Activated CD8-positive, alpha-beta memory T cell treated with anti-CD3 and anti-CD28 coated beads, Interleukin-2, amount 10 ng/mL, durations not matched to agents 7 days and 5 days (primary cell): ENCODE measurements at regions of chr17 and their contacts with region 1.

Region 1: GRCh38 chr17:42248351-42249179 is 27.6 kb downstream of the STAT5B start:
- DNase-seq: peak; percentile 89
- ATAC-seq: peak; percentile 89
- H3K4me3 Mint-ChIP-seq: peak overlapping the region; percentile 80
- H3K27ac Mint-ChIP-seq: peak overlapping the region; percentile 96
- H3K4me1 Mint-ChIP-seq: peaks cover 65% of the 10 kb centered on the region
- H3K27me3 Mint-ChIP-seq: no peaks in the 10 kb centered on the region

Region 2: DNA sequence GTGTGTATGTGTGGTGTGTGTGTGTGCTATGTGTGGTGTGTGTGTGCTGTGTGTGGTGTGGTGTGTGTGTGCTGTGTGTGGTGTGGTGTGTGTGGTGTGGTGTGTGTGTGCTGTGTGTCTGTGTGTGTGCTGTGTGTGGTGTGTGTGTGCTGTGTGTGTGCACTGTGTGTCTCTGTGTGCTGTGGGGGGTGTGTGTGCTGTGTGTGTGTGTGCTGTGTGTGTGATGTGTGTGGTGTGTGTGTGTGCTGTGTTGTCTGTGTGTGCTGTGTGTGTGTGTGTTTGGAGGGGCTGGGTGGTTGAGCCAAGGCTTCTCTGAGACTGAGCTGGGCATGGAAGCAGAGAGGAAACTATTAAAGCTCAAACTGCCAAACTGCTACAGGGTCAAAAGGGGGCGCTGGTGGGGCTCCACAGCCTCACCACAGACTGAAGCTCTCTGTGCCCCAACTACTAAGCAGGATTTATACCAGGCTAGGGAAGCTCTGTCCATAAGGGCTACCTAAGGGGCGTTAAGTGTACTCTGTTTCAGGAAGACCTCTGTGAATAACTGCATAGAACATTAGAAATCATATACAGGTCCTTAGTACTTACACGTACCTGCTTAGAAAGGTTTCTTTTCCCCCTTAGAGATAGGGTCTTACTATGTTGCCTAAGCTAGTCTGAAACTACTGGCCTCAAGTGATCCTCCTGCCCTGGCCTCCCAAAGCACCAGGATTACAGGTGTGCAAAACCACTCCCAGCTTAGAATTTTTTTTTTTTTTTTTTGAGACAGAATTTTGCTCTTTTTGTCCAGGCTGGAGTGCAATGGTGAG is 26.4 kb before region 1 on chr17:
- CTCF ChIA-PET with region 1: interaction called, 51 read pairs
- DNase-seq: peak; percentile 68
- ATAC-seq: peak; percentile 83
- H3K4me3 Mint-ChIP-seq: no peak overlapping the region
- H3K27ac Mint-ChIP-seq: peak overlapping the region; percentile 52
- H3K4me1 Mint-ChIP-seq: peaks cover 4% of the 10 kb centered on the region
- H3K27me3 Mint-ChIP-seq: no peaks in the 10 kb centered on the region

Region 3: GRCh38 chr17:42233941-42234340 is 14.6 kb before region 1 on chr17:
- CTCF ChIA-PET with region 1: interaction called, 10 read pairs
- DNase-seq: no peak
- ATAC-seq: no peak
- H3K4me3 Mint-ChIP-seq: no peak overlapping the region
- H3K27ac Mint-ChIP-seq: no peak overlapping the region
- H3K4me1 Mint-ChIP-seq: peaks cover 18% of the 10 kb centered on the region
- H3K27me3 Mint-ChIP-seq: no peaks in the 10 kb centered on the region

Region 4: GRCh38 chr17:42270596-42270995 is 22.0 kb after region 1 on chr17:
- CTCF ChIA-PET with region 1: interaction called, 11 read pairs
- DNase-seq: no peak
- ATAC-seq: no peak
- H3K4me3 Mint-ChIP-seq: no peak overlapping the region
- H3K27ac Mint-ChIP-seq: peak overlapping the region; percentile 91
- H3K4me1 Mint-ChIP-seq: peaks cover 72% of the 10 kb centered on the region
- H3K27me3 Mint-ChIP-seq: no peaks in the 10 kb centered on the region

Region 5: GRCh38 chr17:42276359-42276608 is 27.7 kb after region 1 on chr17 and contains the start of gene STAT5B:
- CTCF ChIA-PET with region 1: interaction called, 11 read pairs
- DNase-seq: peak; percentile 78
- ATAC-seq: peak; percentile 75
- H3K4me3 Mint-ChIP-seq: peak within 1 kb of the TSS; percentile 98
- H3K27ac Mint-ChIP-seq: peak within 1 kb of the TSS; percentile 91
- H3K4me1 Mint-ChIP-seq: peaks cover 47% of the 10 kb centered on the region
- H3K27me3 Mint-ChIP-seq: no peaks in the 10 kb centered on the region
- total RNA-seq, gene STAT5B: 112 to 116 TPM